Posterior vena cava (tissue), 2 donors: ENCODE measurements at regions of chr2 and their contacts with region 1.

Region 1: GRCh38 chr2:118350621-118351020 is 262.4 kb downstream of the INSIG2 start:
- DNase-seq: no peak

Region 2: GRCh38 chr2:117137371-117137770 is 1213.2 kb before region 1 on chr2:
- intact Hi-C with region 1: loop called in 1 of 2 experiments (anchors 5 kb)
- DNase-seq: no peak